Panc1 (cell line): ENCODE measurements at regions of chr5 and their contacts with region 1.

Region 1: GRCh38 chr5:58002318-58002717 is 457.6 kb downstream of the PLK2 start:
- DNase-seq: peak; percentile 8
- ATAC-seq: no peak
- H3K4me3 ChIP-seq: no peak overlapping the region
- H3K27ac ChIP-seq: no peak overlapping the region
- H3K4me1 ChIP-seq: no peaks in the 10 kb centered on the region
- H3K27me3 ChIP-seq: no peaks in the 10 kb centered on the region
- CTCF ChIP-seq: no peak

Region 2: GRCh38 chr5:57900381-57900944 is 101.9 kb before region 1 on chr5:
- CTCF ChIA-PET with region 1: no interaction called
- POLR2A ChIA-PET with region 1: no interaction called
- in situ Hi-C with region 1: no loop called
- intact Hi-C with region 1: no loop called
- DNase-seq: no peak
- ATAC-seq: no peak
- H3K4me3 ChIP-seq: no peak overlapping the region
- H3K27ac ChIP-seq: 0 out of 2 replicates have a peak overlapping the region, but pooled peaks have one; percentile 20
- H3K4me1 ChIP-seq: peaks cover 2% of the 10 kb centered on the region; the same call in 1 of the 2 replicates
- H3K27me3 ChIP-seq: no peaks in the 10 kb centered on the region
- CTCF ChIP-seq: no peak

Region 3: DNA sequence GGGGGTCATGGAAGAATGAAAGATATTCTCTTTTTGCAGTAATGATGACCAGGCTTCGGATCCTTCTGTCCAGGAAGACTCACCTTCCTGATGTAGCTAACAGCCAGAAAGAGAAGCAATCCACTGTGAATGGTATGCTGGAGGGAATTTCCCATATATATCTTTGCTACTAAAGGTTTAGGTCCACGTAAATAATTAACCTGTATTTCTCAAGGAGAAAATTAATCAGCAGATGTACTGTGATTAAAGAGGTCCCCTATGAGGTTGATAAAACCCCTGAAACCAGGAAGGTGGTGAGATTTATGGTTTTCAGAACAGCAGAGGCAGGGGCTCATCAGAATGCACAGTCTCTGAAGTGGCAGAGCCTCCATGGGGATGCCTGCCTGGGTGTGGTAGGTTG is 569.2 kb after region 1 on chr5:
- CTCF ChIA-PET with region 1: no interaction called
- POLR2A ChIA-PET with region 1: interaction called, 17 read pairs
- in situ Hi-C with region 1: no loop called
- intact Hi-C with region 1: no loop called
- DNase-seq: no peak
- ATAC-seq: no peak
- H3K4me3 ChIP-seq: no peak overlapping the region
- H3K27ac ChIP-seq: no peak overlapping the region
- H3K4me1 ChIP-seq: no peaks in the 10 kb centered on the region
- H3K27me3 ChIP-seq: peaks cover 4% of the 10 kb centered on the region; the same call in 1 of the 2 replicates
- CTCF ChIP-seq: no peak